ENCODE measurements at regions of chr10 and their contacts with region 1.

Region 1: DNA sequence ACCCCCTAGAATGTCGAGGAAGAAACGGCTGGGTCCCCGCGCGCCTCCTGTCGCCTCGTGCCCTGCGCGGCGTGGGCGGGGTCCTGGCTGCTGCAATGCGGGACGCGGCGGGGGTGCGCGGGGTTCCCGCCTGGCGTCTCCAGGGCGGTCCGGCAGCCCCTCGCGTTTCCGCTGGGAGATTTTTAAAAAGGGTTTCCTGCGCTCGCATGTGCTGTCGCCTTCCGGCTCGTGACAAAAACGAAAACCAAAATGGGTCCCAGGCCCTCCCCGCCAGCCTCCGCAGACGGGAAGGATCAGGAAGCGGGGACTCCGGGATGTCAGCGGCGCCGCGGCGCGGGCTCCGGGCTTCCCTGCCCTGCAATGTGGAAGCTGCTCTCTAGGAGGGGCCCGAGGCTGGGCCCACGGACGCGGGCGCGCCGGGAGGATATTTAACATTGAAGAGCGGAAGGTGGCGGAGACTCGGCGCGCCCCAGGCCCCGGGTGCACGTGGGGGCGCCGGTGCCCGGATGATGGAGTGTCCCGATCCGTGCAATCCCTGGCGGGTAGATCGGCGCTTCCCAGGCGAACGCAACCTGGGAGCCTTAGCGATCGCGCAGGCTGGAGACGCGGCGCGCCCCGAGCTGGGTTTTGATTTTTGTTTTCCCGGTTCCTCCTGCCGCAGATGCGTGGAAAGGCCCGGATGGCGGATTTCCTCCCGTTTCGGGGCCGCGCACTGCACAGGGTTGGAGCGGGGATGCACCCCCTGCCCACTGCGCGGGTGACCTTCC is 1.0 kb downstream of the PFKP start:
- DNase-seq: peak; percentile 44 to 71 (median 60)
- H3K4me3 ChIP-seq: peak overlapping the region; percentile 69 to 75
- H3K4me3 Mint-ChIP-seq: peak overlapping the region; percentile 88 to 95 (median 90)
- H3K27ac ChIP-seq: peak overlapping the region; percentile 72
- H3K27ac Mint-ChIP-seq: peak overlapping the region; percentile 64 to 87 (median 82)
- H3K4me1 ChIP-seq: peaks cover 35% of the 10 kb centered on the region
- H3K4me1 Mint-ChIP-seq: peaks cover 18 to 50% (median 38%) of the 10 kb centered on the region in 4 donors
- H3K27me3 ChIP-seq: no peaks in the 10 kb centered on the region
- H3K27me3 Mint-ChIP-seq: peaks cover 0 to 1% of the 10 kb centered on the region in 2 donors

Region 2: DNA sequence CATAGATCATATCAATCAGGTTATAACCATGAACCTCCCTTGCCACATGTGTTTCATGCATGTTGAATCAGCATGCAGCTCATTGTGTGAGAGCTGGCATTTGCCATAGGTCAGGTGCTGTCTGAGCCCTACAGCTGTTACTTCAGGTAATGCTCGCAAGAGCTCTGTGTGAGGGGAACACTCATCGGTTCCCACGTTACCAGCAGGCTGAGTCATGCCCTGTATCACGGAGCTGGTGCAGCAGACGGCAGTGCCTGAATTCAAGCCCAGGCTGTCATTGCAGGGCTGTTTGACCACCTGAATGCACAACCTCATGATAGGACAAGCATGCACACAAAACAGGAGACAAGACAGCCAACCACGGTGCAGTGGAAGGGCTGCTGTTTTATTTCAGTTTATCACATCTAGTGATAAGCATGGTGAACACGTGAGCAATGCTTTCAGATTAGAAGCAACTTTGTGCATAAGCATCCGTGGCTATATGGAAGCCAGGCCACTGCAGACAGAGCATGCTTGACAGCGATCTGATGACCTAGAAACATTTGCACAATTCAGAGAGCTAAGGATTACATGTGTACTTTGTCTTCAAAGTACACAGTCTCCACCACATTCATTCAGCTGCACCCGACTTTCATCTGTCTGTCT is 57.4 kb before region 1 on chr10:
- CTCF ChIA-PET with region 1: no interaction called
- POLR2A ChIA-PET with region 1: no interaction called
- intact Hi-C with region 1: no loop called
- DNase-seq: no peak
- H3K4me3 ChIP-seq: no peak overlapping the region
- H3K4me3 Mint-ChIP-seq: no peak overlapping the region
- H3K27ac ChIP-seq: no peak overlapping the region
- H3K27ac Mint-ChIP-seq: no peak overlapping the region
- H3K4me1 ChIP-seq: no peaks in the 10 kb centered on the region
- H3K4me1 Mint-ChIP-seq: peaks cover 0 to 2% (median 0%) of the 10 kb centered on the region in 4 donors
- H3K27me3 ChIP-seq: peaks cover 3% of the 10 kb centered on the region
- H3K27me3 Mint-ChIP-seq: peaks cover 31 to 47% of the 10 kb centered on the region in 2 donors

Region 3: GRCh38 chr10:3095373-3096139 is 27.2 kb after region 1 on chr10:
- CTCF ChIA-PET with region 1: no interaction called
- POLR2A ChIA-PET with region 1: interaction called, 7 read pairs
- intact Hi-C with region 1: loop called (anchors 1 kb)
- DNase-seq: peak; percentile 16 to 73 (median 19)
- H3K4me3 ChIP-seq: no peak overlapping the region
- H3K4me3 Mint-ChIP-seq: peak overlapping the region in 6 of 8 donors; percentile 50 to 71 (median 59)
- H3K27ac ChIP-seq: peak overlapping the region; percentile 1
- H3K27ac Mint-ChIP-seq: peak overlapping the region; percentile 20 to 82 (median 50)
- H3K4me1 ChIP-seq: peaks cover 57% of the 10 kb centered on the region
- H3K4me1 Mint-ChIP-seq: peaks cover 43 to 63% (median 54%) of the 10 kb centered on the region in 4 donors
- H3K27me3 ChIP-seq: no peaks in the 10 kb centered on the region
- H3K27me3 Mint-ChIP-seq: no peaks in the 10 kb centered on the region

Region 4: GRCh38 chr10:3172446-3173170 is 104.2 kb after region 1 on chr10 and contains the start of gene PITRM1:
- CTCF ChIA-PET with region 1: no interaction called
- POLR2A ChIA-PET with region 1: interaction called, 5 read pairs
- intact Hi-C with region 1: loop called (anchors 1 kb)
- DNase-seq: peak; percentile 98 to 99 (median 99)
- H3K4me3 ChIP-seq: peak within 1 kb of the TSS; percentile 63 to 81
- H3K4me3 Mint-ChIP-seq: peak within 1 kb of the TSS; percentile 87 to 93 (median 90)
- H3K27ac ChIP-seq: peak within 1 kb of the TSS; percentile 80
- H3K27ac Mint-ChIP-seq: peak within 1 kb of the TSS; percentile 91 to 97 (median 94)
- H3K4me1 ChIP-seq: peaks cover 16% of the 10 kb centered on the region
- H3K4me1 Mint-ChIP-seq: peaks cover 10 to 20% (median 14%) of the 10 kb centered on the region in 4 donors
- H3K27me3 ChIP-seq: no peaks in the 10 kb centered on the region
- H3K27me3 Mint-ChIP-seq: no peaks in the 10 kb centered on the region
- total RNA-seq, gene PITRM1: 78.5 to 80.7 TPM

Region 5: GRCh38 chr10:3226960-3227744 is 158.8 kb after region 1 on chr10:
- CTCF ChIA-PET with region 1: no interaction called
- POLR2A ChIA-PET with region 1: no interaction called
- intact Hi-C with region 1: no loop called
- DNase-seq: no peak
- H3K4me3 ChIP-seq: no peak overlapping the region
- H3K4me3 Mint-ChIP-seq: peak overlapping the region in 6 of 8 donors; percentile 6 to 67 (median 56)
- H3K27ac ChIP-seq: no peak overlapping the region
- H3K27ac Mint-ChIP-seq: peak overlapping the region in 4 of 7 donors; percentile 65 to 94 (median 86)
- H3K4me1 ChIP-seq: peaks cover 19% of the 10 kb centered on the region
- H3K4me1 Mint-ChIP-seq: peaks cover 0 to 20% (median 16%) of the 10 kb centered on the region in 4 donors
- H3K27me3 ChIP-seq: no peaks in the 10 kb centered on the region
- H3K27me3 Mint-ChIP-seq: no peaks in the 10 kb centered on the region

Region 6: DNA sequence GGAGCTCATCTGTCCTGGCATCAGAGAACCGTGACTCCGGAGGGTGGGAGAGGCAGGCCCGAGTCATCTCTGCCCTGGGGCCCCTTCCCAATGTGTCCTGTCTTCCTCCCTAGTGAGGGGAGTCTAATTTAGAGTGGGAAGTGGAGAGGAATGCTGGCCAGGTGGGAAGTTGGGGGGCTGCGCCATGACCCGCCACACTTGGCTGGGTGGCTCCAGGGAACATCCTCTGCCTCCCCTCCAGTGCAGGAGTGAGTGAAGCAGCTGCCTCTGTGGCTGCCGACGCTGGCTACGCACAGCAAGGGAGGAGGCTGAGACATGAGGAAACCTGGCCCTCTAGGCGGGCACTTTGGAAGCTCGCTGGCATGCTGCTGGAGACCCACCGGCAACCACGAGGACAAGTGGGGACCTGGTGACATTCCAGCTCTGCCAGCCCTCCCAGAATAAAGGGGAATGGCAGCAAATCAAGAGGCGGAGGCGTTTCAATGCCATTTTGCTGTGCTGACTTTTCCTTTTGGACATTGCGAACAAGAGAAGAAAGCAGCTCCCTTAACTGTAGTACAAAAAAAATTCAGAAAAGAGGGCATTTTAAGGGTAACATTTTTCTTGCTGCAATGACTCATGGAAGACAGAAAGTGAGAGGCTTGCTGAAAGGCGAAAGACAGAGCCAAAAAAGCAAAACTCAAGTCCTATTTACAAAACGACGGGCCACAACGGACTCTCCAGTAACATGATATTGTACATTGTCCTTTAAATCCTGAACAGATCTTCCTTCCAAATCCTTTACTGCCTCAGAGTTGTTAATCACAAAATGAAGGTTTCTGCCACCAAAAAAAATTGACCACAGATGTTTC is 225.4 kb after region 1 on chr10:
- CTCF ChIA-PET with region 1: no interaction called
- POLR2A ChIA-PET with region 1: no interaction called
- intact Hi-C with region 1: no loop called
- DNase-seq: no peak
- H3K4me3 ChIP-seq: no peak overlapping the region
- H3K4me3 Mint-ChIP-seq: no peak overlapping the region
- H3K27ac ChIP-seq: no peak overlapping the region
- H3K27ac Mint-ChIP-seq: no peak overlapping the region
- H3K4me1 ChIP-seq: no peaks in the 10 kb centered on the region
- H3K4me1 Mint-ChIP-seq: no peaks in the 10 kb centered on the region
- H3K27me3 ChIP-seq: no peaks in the 10 kb centered on the region
- H3K27me3 Mint-ChIP-seq: peaks cover under 1 to 8% of the 10 kb centered on the region in 2 donors

Measured in CD4-positive, alpha-beta memory T cell (primary cell).